ENCODE measurements at regions of chr9 and their contacts with region 1.

Region 1: DNA sequence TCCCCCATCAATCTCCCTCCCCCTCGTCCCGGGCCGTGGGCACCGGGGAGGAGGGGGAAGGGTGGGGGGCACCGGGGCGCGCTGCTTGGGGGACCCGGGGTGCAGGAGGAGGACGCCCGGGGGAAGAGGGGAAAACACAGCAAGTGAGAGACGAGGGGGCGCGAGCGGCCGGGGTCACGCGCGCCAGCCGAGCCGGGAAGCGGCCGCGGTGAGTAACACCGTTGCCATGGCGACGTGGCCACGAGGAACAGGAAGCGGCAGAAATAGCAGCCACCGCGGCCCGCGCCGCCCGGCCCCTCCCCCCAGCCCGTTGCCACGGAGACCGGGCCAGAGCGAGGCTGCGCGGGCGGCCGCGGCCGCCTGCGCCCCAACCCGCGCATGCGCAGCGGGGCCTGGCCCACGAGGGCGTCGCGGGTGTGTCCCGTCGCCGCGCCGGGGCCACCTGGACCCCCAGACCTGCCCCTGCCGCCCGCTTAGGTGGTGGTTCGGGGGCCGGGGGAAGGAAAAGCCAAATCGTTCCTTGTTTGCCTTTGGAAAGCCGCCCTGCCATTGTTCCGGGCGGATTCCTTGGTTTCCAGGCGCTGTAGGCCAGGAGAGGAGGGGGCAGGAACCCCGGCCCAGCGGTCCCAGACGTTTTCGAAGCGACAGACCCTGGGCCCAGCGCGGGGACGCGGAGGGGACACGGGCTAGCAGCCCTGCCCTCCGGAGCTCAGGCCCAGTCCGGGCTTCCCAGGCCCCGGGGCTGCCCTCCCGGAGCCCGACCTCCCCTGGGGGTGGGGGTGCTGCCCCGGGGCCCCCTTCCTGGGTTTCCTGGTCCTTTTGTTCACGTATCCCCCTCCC is 207.1 kb downstream of the C9orf50 start:
- DNase-seq: peak; percentile 98
- H3K4me3 Mint-ChIP-seq: peak overlapping the region; percentile 83
- H3K27ac Mint-ChIP-seq: peak overlapping the region; percentile 98
- H3K4me1 Mint-ChIP-seq: peaks cover 22% of the 10 kb centered on the region
- H3K27me3 Mint-ChIP-seq: peaks cover 1% of the 10 kb centered on the region

Region 2: GRCh38 chr9:129202613-129203555 is 210.9 kb before region 1 on chr9:
- intact Hi-C with region 1: loop called (anchors 1 kb)
- DNase-seq: peak; percentile 90
- H3K4me3 Mint-ChIP-seq: peak overlapping the region; percentile 66
- H3K27ac Mint-ChIP-seq: peak overlapping the region; percentile 73
- H3K4me1 Mint-ChIP-seq: peaks cover 6% of the 10 kb centered on the region
- H3K27me3 Mint-ChIP-seq: peaks cover 8% of the 10 kb centered on the region

Region 3: GRCh38 chr9:129320575-129321263 is 93.0 kb before region 1 on chr9:
- intact Hi-C with region 1: loop called (anchors 2 kb)
- DNase-seq: peak; percentile 42
- H3K4me3 Mint-ChIP-seq: peak overlapping the region; percentile 77
- H3K27ac Mint-ChIP-seq: peak overlapping the region; percentile 81
- H3K4me1 Mint-ChIP-seq: peaks cover 19% of the 10 kb centered on the region
- H3K27me3 Mint-ChIP-seq: peaks cover 6% of the 10 kb centered on the region

Region 4: GRCh38 chr9:129362287-129363000 is 51.3 kb before region 1 on chr9:
- intact Hi-C with region 1: no loop called
- DNase-seq: no peak
- H3K4me3 Mint-ChIP-seq: no peak overlapping the region
- H3K27ac Mint-ChIP-seq: no peak overlapping the region
- H3K4me1 Mint-ChIP-seq: no peaks in the 10 kb centered on the region
- H3K27me3 Mint-ChIP-seq: peaks cover 4% of the 10 kb centered on the region

Region 5: GRCh38 chr9:129383561-129384416 is 30.0 kb before region 1 on chr9:
- intact Hi-C with region 1: loop called (anchors 1 kb)
- DNase-seq: peak; percentile 55
- H3K4me3 Mint-ChIP-seq: peak overlapping the region; percentile 47
- H3K27ac Mint-ChIP-seq: no peak overlapping the region
- H3K4me1 Mint-ChIP-seq: no peaks in the 10 kb centered on the region
- H3K27me3 Mint-ChIP-seq: peaks cover 12% of the 10 kb centered on the region

Region 6: GRCh38 chr9:129460323-129461261 is 46.8 kb after region 1 on chr9:
- intact Hi-C with region 1: loop called (anchors 1 kb)
- DNase-seq: peak; percentile 83
- H3K4me3 Mint-ChIP-seq: peak overlapping the region; percentile 74
- H3K27ac Mint-ChIP-seq: peak overlapping the region; percentile 91
- H3K4me1 Mint-ChIP-seq: peaks cover 39% of the 10 kb centered on the region
- H3K27me3 Mint-ChIP-seq: peaks cover 1% of the 10 kb centered on the region

Region 7: GRCh38 chr9:129487642-129488409 is 74.1 kb after region 1 on chr9:
- intact Hi-C with region 1: loop called (anchors 2 kb)
- DNase-seq: peak; percentile 17
- H3K4me3 Mint-ChIP-seq: peak overlapping the region; percentile 92
- H3K27ac Mint-ChIP-seq: peak overlapping the region; percentile 98
- H3K4me1 Mint-ChIP-seq: peaks cover 60% of the 10 kb centered on the region
- H3K27me3 Mint-ChIP-seq: peaks cover 5% of the 10 kb centered on the region

Region 8: GRCh38 chr9:129580211-129580915 is 166.6 kb after region 1 on chr9:
- intact Hi-C with region 1: loop called (anchors 1 kb)
- DNase-seq: peak; percentile 72
- H3K4me3 Mint-ChIP-seq: peak overlapping the region; percentile 84
- H3K27ac Mint-ChIP-seq: peak overlapping the region; percentile 83
- H3K4me1 Mint-ChIP-seq: peaks cover 90% of the 10 kb centered on the region
- H3K27me3 Mint-ChIP-seq: no peaks in the 10 kb centered on the region

Measured in activated T-helper 1 cell treated with anti-CD3 and anti-CD28 coated beads, Interleukin-12 subunit alpha, Interleukin-12 subunit beta, Interleukin-2, Interleukin-4 antibody, amounts not matched to agents 30 ng/mL and 10 ng/mL and 1 ng/mL, durations not matched to agents 14 hours and 24 hours and 36 hours (primary cell).